ENCODE measurements at regions of chr19 and their contacts with region 1.

Region 1: GRCh38 chr19:3365836-3366752 is at the start of gene NFIC:
- DNase-seq: peak; percentile 80 to 87 (median 86)
- ATAC-seq: peak; percentile 49 to 65 (median 56)
- H3K4me3 ChIP-seq: peak within 1 kb of the TSS; percentile 81 to 90 (median 90)
- H3K27ac ChIP-seq: peak within 1 kb of the TSS; percentile 89 to 97 (median 95)
- H3K4me1 ChIP-seq: peaks cover 0 to 23% (median 5%) of the 10 kb centered on the region in 4 donors
- H3K27me3 ChIP-seq: no peaks in the 10 kb centered on the region
- CTCF ChIP-seq: no peak
- POLR2A ChIP-seq: peak; percentile 41
- total RNA-seq, gene NFIC: 94.6 to 168 (median 120) TPM

Region 2: DNA sequence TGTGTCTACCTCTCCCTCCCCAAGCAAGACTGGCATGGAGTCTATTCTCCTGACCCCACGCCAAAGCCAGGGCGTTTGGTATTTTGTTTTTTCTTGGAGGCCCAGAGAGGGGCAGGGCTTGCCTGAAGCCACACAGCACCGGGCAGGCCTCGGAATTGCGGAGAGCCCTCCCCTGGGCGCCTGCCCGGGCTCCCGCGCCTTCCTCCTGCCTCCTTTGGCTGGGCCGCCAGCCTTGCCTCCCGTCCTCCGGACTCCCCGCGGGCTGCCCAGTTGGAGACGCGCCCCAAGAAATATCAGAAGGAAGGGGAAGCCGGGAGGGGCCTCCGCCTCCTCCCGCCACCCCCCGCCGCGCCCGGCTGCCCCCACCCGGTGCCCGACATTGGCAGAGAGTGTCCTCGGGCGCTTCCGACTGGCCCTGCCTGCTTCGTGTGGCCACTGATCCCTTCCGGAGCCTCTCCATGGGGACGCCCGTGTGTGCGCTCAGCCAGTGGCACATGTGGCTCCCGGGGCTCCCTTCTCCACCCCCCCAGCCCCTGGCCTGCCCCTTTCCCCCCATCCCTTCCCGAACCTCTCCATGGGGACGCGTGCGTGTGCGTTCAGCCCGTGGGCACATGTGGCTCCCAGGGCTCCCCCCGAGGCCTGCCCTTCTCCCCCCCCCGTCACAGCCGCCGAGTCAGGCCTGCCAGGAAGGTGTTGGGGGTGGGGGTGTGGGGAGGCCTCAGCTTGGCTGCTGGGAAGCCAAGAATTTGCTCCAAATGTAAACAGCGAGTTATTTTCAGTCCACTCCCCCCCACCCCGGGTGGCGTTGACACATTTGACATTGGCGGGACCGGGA is 37.6 kb after region 1 on chr19:
- intact Hi-C with region 1: loop called in 1 of 2 experiments (anchors 5 kb)
- DNase-seq: peak; percentile 90 to 94 (median 93)
- ATAC-seq: peak; percentile 58 to 71 (median 64)
- H3K4me3 ChIP-seq: peak overlapping the region; percentile 21 to 54 (median 47)
- H3K27ac ChIP-seq: peak overlapping the region; percentile 99 to 100 (median 99)
- H3K4me1 ChIP-seq: peaks cover 0 to 95% (median 31%) of the 10 kb centered on the region in 4 donors
- H3K27me3 ChIP-seq: no peaks in the 10 kb centered on the region
- CTCF ChIP-seq: no peak
- POLR2A ChIP-seq: no peak

Region 3: GRCh38 chr19:3429581-3430080 is 63.5 kb after region 1 on chr19:
- intact Hi-C with region 1: loop called (anchors 10 kb)
- DNase-seq: peak; percentile 82 to 97 (median 95)
- ATAC-seq: peak; percentile 71 to 84 (median 82)
- H3K4me3 ChIP-seq: no peak overlapping the region
- H3K27ac ChIP-seq: peak overlapping the region; percentile 34 to 77 (median 70)
- H3K4me1 ChIP-seq: peaks cover 0 to 58% (median 21%) of the 10 kb centered on the region in 4 donors
- H3K27me3 ChIP-seq: no peaks in the 10 kb centered on the region
- CTCF ChIP-seq: peak; percentile 98 to 100 (median 99)
- POLR2A ChIP-seq: peak; percentile 11

Region 4: DNA sequence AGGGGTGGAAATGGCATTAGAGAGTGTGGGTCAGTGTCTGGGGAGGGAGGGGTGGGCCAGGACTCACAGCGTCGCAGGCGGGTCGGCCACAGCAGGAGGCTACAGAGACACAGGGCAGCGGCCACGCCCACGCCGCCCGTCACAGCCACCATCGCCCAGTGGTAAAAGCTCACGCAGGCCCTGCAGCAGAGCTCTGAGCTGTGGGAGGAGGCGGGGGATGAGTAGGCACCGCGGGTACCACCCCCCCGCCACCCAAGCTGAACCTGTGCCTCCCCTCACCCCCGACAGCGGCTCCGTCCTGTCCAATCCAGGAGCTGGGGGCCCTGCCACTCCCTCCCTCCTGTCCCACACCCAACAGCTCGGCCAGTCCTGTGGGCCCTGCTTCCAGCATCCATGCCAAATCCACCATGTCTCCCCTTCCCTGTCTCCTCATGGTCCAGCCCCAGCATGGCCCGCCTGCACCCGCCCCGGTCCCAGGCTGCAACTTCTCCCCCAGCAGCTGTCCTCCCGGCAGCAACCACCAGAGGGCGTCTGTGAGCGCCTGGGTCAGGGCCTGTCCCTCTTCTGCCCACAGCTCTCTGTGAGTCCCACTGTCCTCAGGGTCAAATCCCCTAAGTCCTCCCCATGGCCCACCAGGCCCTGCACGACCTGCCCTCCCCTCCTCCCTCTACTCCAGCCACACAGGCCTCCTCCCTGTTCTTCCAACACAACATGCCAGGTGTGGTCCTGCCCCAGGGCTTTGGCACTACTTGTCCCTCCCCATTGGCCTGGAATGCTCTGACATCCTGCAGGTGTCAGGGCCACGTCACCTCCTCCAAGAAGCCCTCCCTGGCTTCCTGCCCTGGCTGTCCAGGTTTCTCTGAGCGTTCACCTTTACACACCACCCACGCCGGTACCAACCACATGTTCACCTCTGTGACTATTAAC is 178.9 kb after region 1 on chr19:
- intact Hi-C with region 1: no loop called
- DNase-seq: peak; percentile 76 to 83 (median 80)
- ATAC-seq: peak; percentile 78 to 88 (median 82)
- H3K4me3 ChIP-seq: no peak overlapping the region
- H3K27ac ChIP-seq: no peak overlapping the region
- H3K4me1 ChIP-seq: no peaks in the 10 kb centered on the region
- H3K27me3 ChIP-seq: no peaks in the 10 kb centered on the region
- CTCF ChIP-seq: peak; percentile 93 to 98 (median 96)
- POLR2A ChIP-seq: no peak